ENCODE measurements at regions of chr18 and their contacts with region 1.

Region 1: GRCh38 chr18:39966275-39966674 is 1988.8 kb upstream of the PIK3C3 start:
- DNase-seq: no peak
- H3K4me3 ChIP-seq: no peak overlapping the region
- H3K27ac ChIP-seq: no peak overlapping the region
- H3K4me1 ChIP-seq: peaks cover 16% of the 10 kb centered on the region
- H3K27me3 ChIP-seq: no peaks in the 10 kb centered on the region
- CTCF ChIP-seq: peak; percentile 56 to 57

Region 2: GRCh38 chr18:39799006-39799405 is 167.3 kb before region 1 on chr18:
- CTCF ChIA-PET with region 1: no interaction called
- dilution Hi-C with region 1: no loop called
- in situ Hi-C with region 1: no loop called
- intact Hi-C with region 1: loop called (anchors 10 kb)
- DNase-seq: peak; percentile 40
- H3K4me3 ChIP-seq: peak overlapping the region; percentile 46 to 95 (median 66)
- H3K27ac ChIP-seq: peak overlapping the region; percentile 88
- H3K4me1 ChIP-seq: peaks cover 10% of the 10 kb centered on the region
- H3K27me3 ChIP-seq: no peaks in the 10 kb centered on the region
- CTCF ChIP-seq: no peak

Region 3: DNA sequence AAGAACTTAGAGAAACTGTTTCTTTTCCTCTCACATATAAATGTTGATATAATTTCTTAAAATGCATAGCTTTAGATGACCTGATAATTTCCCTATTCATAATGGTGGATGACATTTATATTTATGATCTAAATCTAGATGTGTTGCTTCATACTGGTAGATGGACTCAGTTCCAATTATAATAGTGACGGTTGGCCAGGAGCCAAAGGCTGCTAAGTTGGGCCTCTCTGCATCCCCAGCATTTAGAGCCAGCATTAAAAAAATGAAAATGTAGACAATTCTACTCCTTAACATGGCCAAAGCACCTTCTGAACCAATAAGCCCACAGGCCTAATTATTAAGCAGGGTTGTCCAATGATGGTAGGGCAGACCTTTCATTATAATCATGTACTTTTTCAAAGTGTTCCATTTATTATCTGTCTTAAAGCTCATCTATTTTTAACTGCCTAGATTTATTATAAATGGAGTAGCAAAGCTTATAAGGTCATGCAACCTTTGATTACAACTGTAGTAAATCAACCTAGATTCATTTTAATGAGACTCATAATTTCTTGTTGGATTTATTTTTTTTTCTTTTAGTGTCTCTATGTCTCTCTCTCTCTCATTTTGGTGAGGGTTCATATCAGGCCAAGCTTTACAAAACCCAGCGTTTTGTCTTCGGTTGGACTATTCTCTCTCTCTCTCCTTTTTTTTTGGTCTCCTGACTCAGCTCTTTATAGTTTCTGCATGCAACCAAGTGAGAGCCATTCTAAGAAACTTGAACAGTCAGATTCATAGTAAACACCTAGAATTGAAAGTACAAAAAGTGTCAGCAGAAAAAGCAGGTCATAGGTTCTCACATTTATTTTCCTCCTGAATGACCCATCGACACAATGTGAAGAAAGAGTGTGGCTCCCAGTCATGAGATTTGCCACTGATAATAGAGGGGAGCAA is 27.3 kb before region 1 on chr18:
- CTCF ChIA-PET with region 1: no interaction called
- dilution Hi-C with region 1: no loop called
- in situ Hi-C with region 1: no loop called
- intact Hi-C with region 1: no loop called
- DNase-seq: no peak
- H3K4me3 ChIP-seq: no peak overlapping the region
- H3K27ac ChIP-seq: no peak overlapping the region
- H3K4me1 ChIP-seq: no peaks in the 10 kb centered on the region
- H3K27me3 ChIP-seq: no peaks in the 10 kb centered on the region
- CTCF ChIP-seq: no peak

Region 4: DNA sequence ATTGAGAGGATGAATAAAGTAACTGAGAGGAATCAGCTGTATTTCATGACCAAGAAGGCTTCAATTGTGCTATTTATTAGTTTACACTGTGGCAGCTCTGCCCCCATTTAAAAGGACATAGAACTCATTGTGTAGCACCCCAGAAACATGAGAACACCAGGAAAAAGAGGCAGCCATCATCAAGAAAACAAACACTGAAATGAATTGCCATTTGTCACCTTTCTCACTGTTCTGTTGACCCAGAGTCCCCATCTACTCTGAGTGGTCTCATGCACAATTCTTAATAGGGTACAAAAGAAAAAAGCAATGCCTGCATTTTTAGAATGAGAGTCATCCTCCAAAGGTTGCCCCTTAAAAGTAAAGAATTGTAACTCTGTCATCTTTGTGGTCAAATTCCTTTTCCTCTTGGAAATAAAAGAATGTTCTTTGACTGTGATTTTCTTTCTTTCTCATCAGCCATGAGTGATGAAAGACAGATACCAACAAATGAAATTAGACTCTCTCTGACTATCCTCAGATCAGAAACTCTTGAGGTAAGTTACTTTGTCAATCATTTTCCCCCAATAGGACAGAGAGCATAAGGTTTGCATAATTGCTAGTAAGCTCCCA is 46.8 kb after region 1 on chr18:
- CTCF ChIA-PET with region 1: no interaction called
- dilution Hi-C with region 1: no loop called
- in situ Hi-C with region 1: no loop called
- intact Hi-C with region 1: no loop called
- DNase-seq: no peak
- H3K4me3 ChIP-seq: no peak overlapping the region
- H3K27ac ChIP-seq: no peak overlapping the region
- H3K4me1 ChIP-seq: no peaks in the 10 kb centered on the region
- H3K27me3 ChIP-seq: no peaks in the 10 kb centered on the region
- CTCF ChIP-seq: no peak